SK-N-SH (cell line): ENCODE measurements at regions of chr4 and their contacts with region 1.

Region 1: DNA sequence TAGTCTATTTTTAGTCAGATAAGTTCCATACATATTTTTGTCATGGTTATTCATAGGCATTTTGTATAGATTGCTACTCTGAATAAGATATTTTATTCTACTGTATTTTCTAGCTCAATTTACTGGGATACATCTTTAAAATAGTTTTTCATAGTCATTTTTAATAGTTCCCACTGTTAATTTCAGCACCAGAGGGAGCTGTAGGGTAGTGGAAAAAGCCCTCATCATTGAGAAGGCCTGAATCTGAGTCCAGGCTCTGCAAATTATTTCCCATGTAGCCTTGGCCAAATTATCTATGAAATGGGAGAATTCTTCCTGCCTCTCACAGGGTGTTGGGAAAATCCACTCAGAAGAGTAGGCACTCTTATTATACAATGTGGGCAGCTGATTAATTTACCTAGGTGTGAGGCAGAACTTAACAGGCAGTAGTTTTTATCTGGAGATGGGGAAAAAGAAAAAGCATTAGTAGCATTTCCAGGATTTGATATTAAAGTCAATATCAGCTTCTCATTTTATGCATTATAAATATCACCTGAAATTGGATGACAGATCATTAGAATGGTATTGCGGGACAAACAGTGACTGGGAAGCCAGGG is 102.9 kb upstream of the PAQR3 start:
- DNase-seq: peak; percentile 46
- H3K4me3 ChIP-seq: no peak overlapping the region
- H3K27ac ChIP-seq: no peak overlapping the region
- H3K4me1 ChIP-seq: peaks cover 0 to 8% of the 10 kb centered on the region in 2 experiments; a peak in 2 of 4 replicates
- H3K27me3 ChIP-seq: no peaks in the 10 kb centered on the region
- CTCF ChIP-seq: peak; percentile 66
- EP300 ChIP-seq: no peak
- RAD21 ChIP-seq: peak; percentile 90

Region 2: GRCh38 chr4:78441756-78442155 is 600.4 kb before region 1 on chr4:
- CTCF ChIA-PET with region 1: no interaction called
- POLR2A ChIA-PET with region 1: no interaction called
- DNase-seq: no peak
- H3K4me3 ChIP-seq: no peak overlapping the region
- H3K27ac ChIP-seq: no peak overlapping the region
- H3K4me1 ChIP-seq: peaks cover 0 to 10% of the 10 kb centered on the region in 2 experiments; a peak in 1 of 4 replicates
- H3K27me3 ChIP-seq: no peaks in the 10 kb centered on the region
- CTCF ChIP-seq: no peak
- EP300 ChIP-seq: no peak
- RAD21 ChIP-seq: no peak

Region 3: DNA sequence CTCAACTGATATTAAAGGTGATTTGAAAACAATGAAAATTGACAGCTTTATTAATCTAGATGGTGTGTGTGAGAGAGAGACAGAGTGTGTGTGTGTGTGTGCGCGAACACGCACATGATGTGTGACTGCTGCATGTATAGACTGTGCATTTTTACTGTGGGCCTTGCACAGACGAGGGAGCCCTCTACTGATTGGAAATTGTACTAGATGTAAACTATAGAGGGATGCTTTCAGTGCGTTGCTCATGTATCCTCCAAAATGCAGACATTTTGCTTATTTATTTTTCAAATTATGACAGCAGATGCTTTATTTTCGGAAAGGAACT is 534.2 kb after region 1 on chr4:
- CTCF ChIA-PET with region 1: interaction called, 26 read pairs
- POLR2A ChIA-PET with region 1: no interaction called
- DNase-seq: peak; percentile 48
- H3K4me3 ChIP-seq: no peak overlapping the region
- H3K27ac ChIP-seq: no peak overlapping the region
- H3K4me1 ChIP-seq: no peaks in the 10 kb centered on the region; a peak in 1 of 4 replicates
- H3K27me3 ChIP-seq: no peaks in the 10 kb centered on the region; the same call in 1 of the 2 replicates
- CTCF ChIP-seq: peak; percentile 63
- EP300 ChIP-seq: no peak
- RAD21 ChIP-seq: peak; percentile 89